SK-N-SH (cell line): ENCODE measurements at regions of chr9 and their contacts with region 1.

Region 1: GRCh38 chr9:34591248-34591916 is 1.9 kb upstream of the CNTFR start:
- DNase-seq: peak; percentile 95
- H3K4me3 ChIP-seq: peak overlapping the region in 1 of 2 experiments; percentile 46; a peak in 1 of 4 replicates
- H3K27ac ChIP-seq: no peak overlapping the region
- H3K4me1 ChIP-seq: peaks cover 0 to 29% of the 10 kb centered on the region in 2 experiments; a peak in 1 of 4 replicates
- H3K27me3 ChIP-seq: peaks cover 43% of the 10 kb centered on the region
- CTCF ChIP-seq: peak; percentile 75
- EP300 ChIP-seq: no peak
- RAD21 ChIP-seq: peak; percentile 95

Region 2: DNA sequence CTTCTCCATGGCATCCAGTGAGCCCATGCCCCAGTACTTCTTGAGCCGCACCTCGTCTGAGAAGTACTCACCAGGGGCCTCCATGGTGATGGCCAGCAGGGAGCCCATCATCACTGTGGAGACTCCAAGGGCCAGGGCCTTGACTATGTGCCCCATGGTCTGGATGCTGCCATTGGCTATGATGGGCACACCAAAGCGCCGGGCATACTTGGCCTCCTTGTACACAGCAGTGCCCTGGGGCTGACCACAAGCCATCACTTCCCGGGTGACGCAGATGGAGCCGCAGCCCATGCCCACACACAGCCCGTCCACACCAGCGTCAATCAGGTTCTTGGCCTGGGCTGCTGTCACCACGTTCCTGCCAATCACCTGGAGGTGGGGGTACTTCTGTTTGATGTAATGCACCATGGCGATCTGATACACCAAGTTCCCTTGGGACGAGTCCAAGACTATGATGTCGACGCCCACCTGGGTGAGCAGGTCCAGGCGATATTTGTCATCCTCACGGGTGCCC is 457.9 kb before region 1 on chr9:
- CTCF ChIA-PET with region 1: no interaction called
- POLR2A ChIA-PET with region 1: no interaction called
- DNase-seq: no peak
- H3K4me3 ChIP-seq: no peak overlapping the region
- H3K27ac ChIP-seq: no peak overlapping the region
- H3K4me1 ChIP-seq: no peaks in the 10 kb centered on the region
- H3K27me3 ChIP-seq: no peaks in the 10 kb centered on the region
- CTCF ChIP-seq: no peak
- EP300 ChIP-seq: no peak
- RAD21 ChIP-seq: no peak

Region 3: GRCh38 chr9:34430843-34431437 is 160.4 kb before region 1 on chr9:
- CTCF ChIA-PET with region 1: interaction called, 34 read pairs
- POLR2A ChIA-PET with region 1: no interaction called
- DNase-seq: peak; percentile 79
- H3K4me3 ChIP-seq: no peak overlapping the region
- H3K27ac ChIP-seq: peak overlapping the region in 1 of 2 experiments; percentile 78; a peak in 2 of 4 replicates
- H3K4me1 ChIP-seq: peaks cover 4 to 63% of the 10 kb centered on the region in 2 experiments; a peak in 3 of 4 replicates
- H3K27me3 ChIP-seq: no peaks in the 10 kb centered on the region
- CTCF ChIP-seq: no peak
- EP300 ChIP-seq: peak in 1 of 2 experiments; percentile 71; a peak in 1 of 4 replicates
- RAD21 ChIP-seq: peak; percentile 21; the same call in 1 of the 2 replicates

Region 4: DNA sequence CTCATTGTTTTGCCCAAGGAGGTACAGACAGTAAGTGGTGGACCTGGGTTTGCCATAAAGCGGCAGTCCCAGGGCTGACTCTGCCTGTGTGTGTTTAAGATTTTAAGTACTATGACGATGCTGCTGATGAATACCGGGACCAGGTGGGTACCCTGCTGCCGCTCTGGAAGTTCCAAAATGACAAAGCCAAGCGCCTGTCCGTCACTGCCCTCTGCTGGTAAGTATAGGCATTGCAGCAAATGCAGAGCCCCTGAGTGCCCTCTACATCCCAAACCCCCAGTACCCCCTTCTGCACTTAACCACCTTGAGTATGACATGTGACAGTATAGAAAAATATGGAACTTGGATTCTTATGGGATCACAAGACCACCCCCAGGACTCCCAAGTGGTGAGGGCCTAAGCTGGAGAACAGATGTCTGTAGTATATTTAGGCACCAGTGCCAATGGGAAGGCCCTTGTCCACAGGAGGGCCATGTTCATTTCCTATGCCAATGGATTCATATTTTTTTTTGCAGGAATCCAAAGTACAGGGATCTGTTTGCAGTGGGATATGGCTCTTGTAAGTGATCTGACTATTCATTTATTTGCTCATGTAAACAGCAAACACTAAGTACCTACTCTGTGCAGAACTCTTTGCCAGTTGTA is 90.6 kb before region 1 on chr9:
- CTCF ChIA-PET with region 1: interaction called, 27 read pairs
- POLR2A ChIA-PET with region 1: no interaction called
- DNase-seq: peak; percentile 79
- H3K4me3 ChIP-seq: no peak overlapping the region
- H3K27ac ChIP-seq: no peak overlapping the region
- H3K4me1 ChIP-seq: peaks cover 0 to 6% of the 10 kb centered on the region in 2 experiments; a peak in 1 of 4 replicates
- H3K27me3 ChIP-seq: no peaks in the 10 kb centered on the region
- CTCF ChIP-seq: peak; percentile 97
- EP300 ChIP-seq: no peak
- RAD21 ChIP-seq: peak; percentile 93

Region 5: DNA sequence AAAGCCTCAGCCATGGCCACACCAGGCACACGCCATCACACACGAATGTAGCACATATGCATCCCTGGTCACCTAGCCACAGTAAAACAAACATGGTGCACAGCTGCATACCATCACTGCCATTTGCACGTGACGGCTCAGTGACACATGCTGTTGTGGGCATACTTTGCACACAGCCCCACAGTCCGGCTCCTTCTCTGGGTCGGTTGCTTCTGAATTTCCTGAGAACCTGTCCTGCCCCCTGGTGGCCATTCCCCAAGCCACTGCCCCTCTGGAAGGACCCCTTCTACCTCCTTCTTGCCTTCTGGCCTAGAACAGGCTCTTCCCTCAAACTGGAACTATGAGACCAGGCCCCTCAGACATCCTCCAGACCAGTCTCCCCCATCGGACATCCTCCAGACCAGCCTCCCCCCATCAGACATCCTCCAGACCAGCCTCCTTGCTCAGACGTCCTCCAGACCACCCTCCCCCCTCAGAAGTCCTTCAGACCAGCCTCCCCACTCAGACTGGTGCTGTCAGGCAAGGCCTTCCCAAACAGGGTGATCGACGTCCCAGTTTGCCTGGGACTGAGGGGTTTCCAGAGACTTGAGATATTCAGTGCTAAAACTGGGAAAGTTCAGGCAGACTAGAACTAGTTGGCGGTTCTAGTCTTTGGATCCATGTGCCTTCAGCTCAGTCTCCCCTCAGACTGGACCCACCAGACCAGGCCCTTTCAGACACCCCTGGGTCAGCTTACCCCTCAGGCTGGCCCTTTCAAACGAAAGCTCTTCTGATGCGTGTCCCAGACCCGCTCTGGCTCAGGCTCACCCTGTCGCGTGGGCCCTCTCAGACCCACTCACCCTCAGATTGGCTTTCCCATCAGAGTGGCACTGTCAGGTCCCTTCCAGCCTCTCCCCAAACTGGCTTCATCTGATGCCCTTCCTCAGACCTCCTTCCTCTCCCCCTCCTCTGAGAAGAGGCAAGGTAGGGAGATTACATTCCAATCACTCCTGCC is 44.3 kb before region 1 on chr9:
- CTCF ChIA-PET with region 1: interaction called, 507 read pairs
- POLR2A ChIA-PET with region 1: no interaction called
- DNase-seq: peak; percentile 65
- H3K4me3 ChIP-seq: peak overlapping the region in 1 of 2 experiments; percentile 40; a peak in 1 of 4 replicates
- H3K27ac ChIP-seq: peak overlapping the region in 1 of 2 experiments; percentile 74; a peak in 2 of 4 replicates
- H3K4me1 ChIP-seq: peaks cover 0 to 37% of the 10 kb centered on the region in 2 experiments; a peak in 1 of 4 replicates
- H3K27me3 ChIP-seq: peaks cover 5% of the 10 kb centered on the region; the same call in 1 of the 2 replicates
- CTCF ChIP-seq: peak; percentile 79
- EP300 ChIP-seq: no peak
- RAD21 ChIP-seq: peak; percentile 67

Region 6: DNA sequence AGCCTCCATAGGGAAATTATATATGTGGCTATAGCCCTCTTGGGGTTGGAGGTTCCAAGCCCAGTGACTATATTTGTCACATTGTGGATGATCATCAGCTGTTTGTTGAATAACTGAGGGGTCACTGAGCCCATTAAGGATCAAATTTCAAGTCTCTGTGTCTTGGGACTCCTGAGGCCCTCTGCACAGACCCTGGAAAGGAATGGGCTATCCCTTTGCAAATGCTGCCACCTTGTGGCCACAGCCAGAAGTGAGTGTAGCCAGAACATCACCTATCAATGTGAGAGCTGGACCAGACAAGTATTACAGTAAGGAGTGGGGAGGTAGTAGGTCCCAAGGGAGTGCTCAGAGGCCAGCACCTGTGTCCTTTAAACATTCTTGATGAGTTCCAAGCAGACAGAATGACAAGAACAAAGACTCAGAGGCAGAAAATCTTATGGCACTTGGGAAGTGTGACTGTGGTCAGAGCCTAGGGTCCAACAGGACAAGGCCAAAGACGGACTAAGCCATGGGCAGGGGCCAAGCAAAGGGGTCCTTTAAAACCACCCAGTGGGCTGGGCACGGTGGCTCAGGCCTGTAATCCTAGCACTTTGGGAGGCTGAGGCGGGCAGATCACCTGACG is 12.3 kb after region 1 on chr9:
- CTCF ChIA-PET with region 1: interaction called, 112 read pairs
- POLR2A ChIA-PET with region 1: no interaction called
- DNase-seq: peak; percentile 88
- H3K4me3 ChIP-seq: no peak overlapping the region; a peak in 1 of 4 replicates
- H3K27ac ChIP-seq: no peak overlapping the region
- H3K4me1 ChIP-seq: peaks cover 0 to 7% of the 10 kb centered on the region in 2 experiments; a peak in 1 of 4 replicates
- H3K27me3 ChIP-seq: no peaks in the 10 kb centered on the region
- CTCF ChIP-seq: peak; percentile 94
- EP300 ChIP-seq: no peak
- RAD21 ChIP-seq: peak; percentile 97

Region 7: GRCh38 chr9:34637356-34638137 is 46.2 kb after region 1 on chr9 and contains the start of gene SIGMAR1:
- CTCF ChIA-PET with region 1: interaction called, 12 read pairs
- POLR2A ChIA-PET with region 1: no interaction called
- DNase-seq: peak; percentile 98
- H3K4me3 ChIP-seq: peak within 1 kb of the TSS; percentile 66 to 69
- H3K27ac ChIP-seq: peak within 1 kb of the TSS; percentile 32 to 72; a peak in 3 of 4 replicates
- H3K4me1 ChIP-seq: peaks cover 4 to 20% of the 10 kb centered on the region in 2 experiments; a peak in 1 of 4 replicates
- H3K27me3 ChIP-seq: no peaks in the 10 kb centered on the region
- CTCF ChIP-seq: no peak
- EP300 ChIP-seq: no peak; a peak in 1 of 4 replicates
- RAD21 ChIP-seq: no peak
- polyA plus RNA-seq, gene SIGMAR1: 73.7 and 79.0 TPM in 2 replicates

Region 8: GRCh38 chr9:35026671-35027070 is 435.3 kb after region 1 on chr9:
- CTCF ChIA-PET with region 1: no interaction called
- POLR2A ChIA-PET with region 1: no interaction called
- DNase-seq: no peak
- H3K4me3 ChIP-seq: no peak overlapping the region
- H3K27ac ChIP-seq: 0 out of 4 replicates have a peak overlapping the region, but pooled peaks of 1 of the 2 experiments have one; percentile 14
- H3K4me1 ChIP-seq: peaks cover 0 to 6% of the 10 kb centered on the region in 2 experiments; a peak in 1 of 4 replicates
- H3K27me3 ChIP-seq: no peaks in the 10 kb centered on the region
- CTCF ChIP-seq: no peak
- EP300 ChIP-seq: no peak
- RAD21 ChIP-seq: no peak